ENCODE measurements at regions of chr1 and their contacts with region 1.

Region 1: DNA sequence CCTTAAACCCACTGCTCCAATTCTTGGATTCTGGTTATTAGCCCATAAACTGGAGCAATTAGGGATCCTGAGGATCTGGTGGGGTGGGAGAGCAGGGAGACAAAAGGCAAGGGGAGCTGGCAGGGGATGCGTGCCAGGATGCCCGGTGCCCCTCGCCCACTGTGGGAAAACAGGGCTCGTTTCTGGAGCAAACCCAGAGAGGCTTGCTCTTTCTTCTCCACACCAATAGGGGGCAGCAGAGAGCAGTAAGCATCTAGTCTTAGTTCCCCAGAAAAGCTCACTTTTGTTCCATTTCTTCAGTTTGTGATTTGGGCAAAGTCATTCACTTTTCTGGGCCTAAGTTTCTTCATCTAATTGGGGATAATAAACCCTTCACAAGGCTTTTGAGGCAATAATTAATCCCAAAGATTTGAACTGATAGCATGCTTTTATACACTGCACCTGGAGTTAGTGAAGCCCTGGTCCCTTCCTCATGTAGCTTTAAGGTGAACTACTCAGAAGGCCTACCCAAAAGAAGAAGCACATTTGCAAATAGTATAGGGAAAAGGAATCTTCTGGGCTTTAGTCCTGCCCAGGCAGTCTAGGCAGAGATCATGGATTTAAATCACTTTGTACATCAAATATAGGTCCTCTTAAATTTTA is 160.6 kb upstream of the USP24 start:
- H3K4me3 Mint-ChIP-seq: no peak overlapping the region
- H3K27ac Mint-ChIP-seq: no peak overlapping the region
- H3K4me1 Mint-ChIP-seq: no peaks in the 10 kb centered on the region
- H3K27me3 Mint-ChIP-seq: peaks cover 1% of the 10 kb centered on the region

Region 2: DNA sequence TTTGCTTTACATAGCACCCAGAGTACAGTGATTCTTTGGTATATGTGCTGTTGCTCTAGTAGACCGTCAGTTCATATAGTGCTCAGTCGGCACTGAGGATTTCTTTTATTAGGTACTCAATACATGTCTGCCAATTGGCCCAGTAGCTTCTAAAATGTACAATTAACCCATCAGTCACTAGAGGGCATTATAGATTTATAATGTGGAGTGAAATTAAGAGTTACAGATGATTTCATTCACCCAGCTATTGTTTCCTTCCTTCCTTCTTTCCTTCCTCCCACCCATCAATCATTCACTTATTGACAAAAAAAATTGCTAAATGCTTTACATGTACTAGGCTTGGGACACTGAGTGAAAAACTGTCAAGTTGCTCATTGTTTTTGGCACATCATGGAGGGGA is 103.0 kb after region 1 on chr1:
- intact Hi-C with region 1: loop called (anchors 5 kb)
- H3K4me3 Mint-ChIP-seq: no peak overlapping the region
- H3K27ac Mint-ChIP-seq: no peak overlapping the region
- H3K4me1 Mint-ChIP-seq: peaks cover 24% of the 10 kb centered on the region
- H3K27me3 Mint-ChIP-seq: peaks cover 17% of the 10 kb centered on the region

Region 3: DNA sequence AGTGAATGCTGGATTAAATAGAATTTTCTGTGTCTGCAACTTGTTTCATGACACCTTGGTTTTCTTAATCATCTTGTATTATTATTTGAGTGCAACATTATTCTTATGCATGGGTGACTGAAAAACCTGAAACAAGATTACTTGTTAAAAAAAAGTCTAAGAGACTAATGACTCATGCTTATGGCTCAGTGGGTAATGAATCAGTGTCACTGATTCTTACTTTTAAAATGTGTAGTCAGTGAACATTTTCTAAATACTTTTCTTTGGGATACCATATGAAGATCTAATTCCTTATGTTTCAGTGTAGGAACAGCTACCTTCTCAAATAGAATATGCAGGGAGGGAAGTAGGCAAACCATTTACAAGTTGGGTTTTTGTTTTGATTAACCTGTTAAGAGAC is 1334.9 kb after region 1 on chr1:
- intact Hi-C with region 1: loop called (anchors 2 kb)
- H3K4me3 Mint-ChIP-seq: no peak overlapping the region
- H3K27ac Mint-ChIP-seq: no peak overlapping the region
- H3K4me1 Mint-ChIP-seq: no peaks in the 10 kb centered on the region
- H3K27me3 Mint-ChIP-seq: no peaks in the 10 kb centered on the region

Measured in dendritic cell treated with granulocyte-macrophage colony-stimulating factor and Interleukin-4, amounts not matched to agents 40 ng/mL and 50 ng/mL, for 4 days (primary cell).